Activated naive CD4-positive, alpha-beta T cell treated with anti-CD3 and anti-CD28 coated beads for 36 hours (primary cell): ENCODE measurements at regions of chr6 and their contacts with region 1.

Region 1: GRCh38 chr6:137271245-137272183 is 52.3 kb upstream of the IFNGR1 start:
- DNase-seq: no peak
- H3K4me3 Mint-ChIP-seq: no peak overlapping the region
- H3K27ac Mint-ChIP-seq: no peak overlapping the region
- H3K4me1 Mint-ChIP-seq: no peaks in the 10 kb centered on the region
- H3K27me3 Mint-ChIP-seq: peaks cover 9% of the 10 kb centered on the region

Region 2: GRCh38 chr6:137094411-137095008 is 177.0 kb before region 1 on chr6:
- CTCF ChIA-PET with region 1: interaction called, 7 read pairs
- intact Hi-C with region 1: loop called (anchors 5 kb)
- DNase-seq: peak; percentile 75
- H3K4me3 Mint-ChIP-seq: no peak overlapping the region
- H3K27ac Mint-ChIP-seq: no peak overlapping the region
- H3K4me1 Mint-ChIP-seq: peaks cover 13% of the 10 kb centered on the region
- H3K27me3 Mint-ChIP-seq: peaks cover 3% of the 10 kb centered on the region

Region 3: DNA sequence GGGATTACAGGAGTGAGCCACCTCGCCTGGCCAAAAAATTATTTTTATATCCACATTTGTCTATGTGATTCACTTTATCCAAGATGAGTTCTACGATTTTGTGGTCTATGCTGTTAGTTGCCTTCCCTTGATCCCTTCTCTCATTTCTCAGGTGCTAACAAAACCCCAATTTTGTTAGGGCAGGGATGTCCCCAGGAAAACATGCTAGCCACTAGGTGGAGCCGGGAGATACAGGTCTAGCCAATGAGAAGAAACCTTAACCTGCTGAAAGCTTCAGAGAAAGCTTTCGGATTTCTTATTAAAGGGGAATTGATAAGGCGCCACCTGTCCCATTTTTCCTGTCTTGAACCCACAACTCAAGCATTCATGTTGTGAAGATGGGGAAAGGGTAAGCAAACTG is 390.1 kb after region 1 on chr6:
- CTCF ChIA-PET with region 1: no interaction called
- intact Hi-C with region 1: no loop called
- DNase-seq: peak; percentile 71
- H3K4me3 Mint-ChIP-seq: no peak overlapping the region
- H3K27ac Mint-ChIP-seq: no peak overlapping the region
- H3K4me1 Mint-ChIP-seq: peaks cover 19% of the 10 kb centered on the region
- H3K27me3 Mint-ChIP-seq: peaks cover 4% of the 10 kb centered on the region

Region 4: GRCh38 chr6:138115877-138116660 is 844.6 kb after region 1 on chr6:
- CTCF ChIA-PET with region 1: no interaction called
- intact Hi-C with region 1: no loop called
- DNase-seq: peak; percentile 60
- H3K4me3 Mint-ChIP-seq: no peak overlapping the region
- H3K27ac Mint-ChIP-seq: no peak overlapping the region
- H3K4me1 Mint-ChIP-seq: peaks cover 6% of the 10 kb centered on the region
- H3K27me3 Mint-ChIP-seq: peaks cover 12% of the 10 kb centered on the region